ENCODE measurements at regions of chr12 and their contacts with region 1.

Region 1: GRCh38 chr12:122471324-122472226 is 29.2 kb downstream of the ZCCHC8 start:
- DNase-seq: no peak
- ATAC-seq: peak; percentile 78
- H3K4me3 ChIP-seq: no peak overlapping the region
- H3K4me1 ChIP-seq: peaks cover 3% of the 10 kb centered on the region
- CTCF ChIP-seq: peak; percentile 65

Region 2: GRCh38 chr12:121980191-121980891 is 491.2 kb before region 1 on chr12:
- intact Hi-C with region 1: no loop called
- DNase-seq: peak in 1 of 3 donors; percentile 10
- ATAC-seq: peak; percentile 32
- H3K4me3 ChIP-seq: no peak overlapping the region
- H3K4me1 ChIP-seq: no peaks in the 10 kb centered on the region
- CTCF ChIP-seq: no peak

Region 3: GRCh38 chr12:122336015-122336946 is 135.3 kb before region 1 on chr12:
- intact Hi-C with region 1: no loop called
- DNase-seq: peak in 2 of 3 donors; percentile 39 to 46
- ATAC-seq: peak; percentile 46
- H3K4me3 ChIP-seq: no peak overlapping the region
- H3K4me1 ChIP-seq: no peaks in the 10 kb centered on the region
- CTCF ChIP-seq: no peak

Region 4: GRCh38 chr12:122399592-122400373 is 71.8 kb before region 1 on chr12:
- intact Hi-C with region 1: loop called in 1 of 2 experiments (anchors 5 kb)
- DNase-seq: peak in 2 of 3 donors; percentile 42 to 58
- ATAC-seq: peak; percentile 78
- H3K4me3 ChIP-seq: no peak overlapping the region
- H3K4me1 ChIP-seq: peaks cover 9% of the 10 kb centered on the region
- CTCF ChIP-seq: peak; percentile 38

Region 5: GRCh38 chr12:122505419-122506051 is 34.0 kb after region 1 on chr12:
- intact Hi-C with region 1: no loop called
- DNase-seq: no peak
- ATAC-seq: no peak
- H3K4me3 ChIP-seq: no peak overlapping the region
- H3K4me1 ChIP-seq: no peaks in the 10 kb centered on the region
- CTCF ChIP-seq: no peak

Region 6: GRCh38 chr12:122793685-122794106 is 322.1 kb after region 1 on chr12:
- intact Hi-C with region 1: no loop called
- DNase-seq: peak in 1 of 3 donors; percentile 30
- ATAC-seq: peak; percentile 79
- H3K4me3 ChIP-seq: no peak overlapping the region
- H3K4me1 ChIP-seq: no peaks in the 10 kb centered on the region
- CTCF ChIP-seq: peak; percentile 16

Measured in mucosa of descending colon (tissue), 3 donors.